Motor neuron (in vitro differentiated cells): ENCODE measurements at regions of chr12 and their contacts with region 1.

Region 1: GRCh38 chr12:3034067-3034750 is 43.0 kb upstream of the TSPAN9 start:
- ATAC-seq: peak; percentile 83 to 99 (median 88)
- H3K4me3 ChIP-seq: no peak overlapping the region
- H3K27ac ChIP-seq: no peak overlapping the region
- H3K4me1 ChIP-seq: peaks cover 22 to 27% of the 10 kb centered on the region in 2 donors

Region 2: GRCh38 chr12:2879853-2880252 is 154.4 kb before region 1 on chr12:
- in situ Hi-C with region 1: loop called in 1 of 9 experiments (anchors 10 kb)
- ATAC-seq: no peak
- H3K4me3 ChIP-seq: no peak overlapping the region
- H3K27ac ChIP-seq: no peak overlapping the region
- H3K4me1 ChIP-seq: peaks cover 10% of the 10 kb centered on the region in 2 donors

Region 3: DNA sequence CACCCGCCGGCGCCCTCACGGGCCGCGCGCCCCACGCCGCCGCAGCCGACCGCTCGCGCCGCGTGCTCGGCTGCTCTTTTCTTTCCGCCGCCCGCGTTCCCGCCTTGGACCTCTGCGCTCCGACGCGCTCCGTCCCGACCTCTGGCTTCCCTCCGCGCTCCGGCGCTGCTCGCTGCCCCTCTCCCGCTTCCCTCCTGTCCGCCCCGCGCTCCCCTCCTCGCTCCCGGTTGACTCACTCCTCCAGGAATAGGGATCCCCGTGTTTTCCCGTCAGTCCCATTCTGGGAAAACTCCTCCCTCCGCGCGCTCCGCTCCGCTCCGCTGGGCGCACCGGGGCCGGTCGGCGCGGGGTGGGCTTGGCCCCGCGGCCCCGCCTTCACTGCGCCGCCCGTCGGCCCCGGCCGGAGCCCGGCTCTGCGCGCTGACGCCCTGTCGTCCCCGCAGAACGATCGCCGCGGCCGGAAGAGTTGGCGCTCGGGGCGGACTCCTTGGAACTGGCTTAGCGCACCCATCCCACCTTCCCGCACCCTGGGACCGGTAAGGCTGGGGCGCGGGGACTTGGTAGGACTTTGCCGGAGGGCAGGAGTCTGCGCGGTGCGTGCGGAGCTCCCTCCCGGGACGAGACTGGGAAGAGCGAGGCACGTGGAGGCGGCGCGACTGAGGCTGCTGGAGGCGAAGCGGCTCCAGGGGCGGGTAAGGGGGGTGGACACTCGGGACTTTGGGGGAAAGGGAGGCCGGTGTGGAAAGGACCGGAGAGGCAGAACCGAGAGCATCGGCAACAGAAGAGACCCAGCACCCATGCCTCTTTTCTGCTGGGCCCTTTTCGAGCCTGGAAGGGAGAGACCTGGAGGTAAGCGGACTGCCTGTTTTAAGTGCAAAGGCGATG is 74.5 kb before region 1 on chr12:
- in situ Hi-C with region 1: loop called in 1 of 9 experiments (anchors 5 kb)
- ATAC-seq: peak; percentile 50 to 68 (median 64)
- H3K4me3 ChIP-seq: peak overlapping the region; percentile 48 to 56 (median 50)
- H3K27ac ChIP-seq: no peak overlapping the region
- H3K4me1 ChIP-seq: peaks cover 3 to 7% of the 10 kb centered on the region in 2 donors

Region 4: DNA sequence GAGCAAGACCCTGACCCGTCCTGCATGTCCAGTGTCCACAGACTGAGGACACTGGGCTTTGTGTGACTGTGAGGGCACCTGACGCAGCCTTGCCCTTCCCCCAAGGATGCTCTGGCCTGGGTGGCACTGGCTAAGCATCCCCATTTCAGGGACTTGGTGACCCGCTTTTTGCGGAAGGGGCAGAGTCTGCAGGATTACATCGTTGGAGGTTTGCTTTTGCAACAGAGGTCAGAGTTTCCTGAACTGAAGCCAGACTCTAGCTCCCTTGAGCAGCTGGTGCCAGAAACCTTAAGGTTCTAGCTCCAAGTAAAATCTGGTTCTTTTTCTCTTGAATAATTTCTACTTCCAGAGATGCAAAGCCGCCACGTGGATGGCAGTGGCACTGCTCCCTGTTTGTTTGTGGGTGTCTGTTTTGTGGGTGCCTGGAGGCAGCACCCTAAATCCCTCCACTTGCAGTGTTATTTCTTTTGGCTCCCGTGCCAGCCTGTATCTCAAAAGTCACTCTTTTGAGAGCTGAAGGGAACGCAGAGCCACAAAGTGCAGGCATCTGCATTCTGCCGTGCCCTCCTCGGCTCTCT is 227.7 kb after region 1 on chr12:
- in situ Hi-C with region 1: no loop called
- ATAC-seq: peak in 5 of 8 experiments; percentile 13 to 44 (median 18)
- H3K4me3 ChIP-seq: no peak overlapping the region
- H3K27ac ChIP-seq: no peak overlapping the region
- H3K4me1 ChIP-seq: peaks cover 30 to 34% of the 10 kb centered on the region in 2 donors